HCT116 (cell line): ENCODE measurements at regions of chr3 and their contacts with region 1.

Region 1: GRCh38 chr3:108808371-108808770 is 14.2 kb upstream of the TRAT1 start:
- DNase-seq: no peak
- ATAC-seq: no peak
- H3K4me3 ChIP-seq: no peak overlapping the region
- H3K27ac ChIP-seq: no peak overlapping the region
- H3K4me1 ChIP-seq: peaks cover 0 to 15% of the 10 kb centered on the region in 2 experiments; a peak in 1 of 4 replicates
- H3K27me3 ChIP-seq: no peaks in the 10 kb centered on the region
- CTCF ChIP-seq: no peak
- POLR2A ChIP-seq: no peak
- RAD21 ChIP-seq: no peak

Region 2: DNA sequence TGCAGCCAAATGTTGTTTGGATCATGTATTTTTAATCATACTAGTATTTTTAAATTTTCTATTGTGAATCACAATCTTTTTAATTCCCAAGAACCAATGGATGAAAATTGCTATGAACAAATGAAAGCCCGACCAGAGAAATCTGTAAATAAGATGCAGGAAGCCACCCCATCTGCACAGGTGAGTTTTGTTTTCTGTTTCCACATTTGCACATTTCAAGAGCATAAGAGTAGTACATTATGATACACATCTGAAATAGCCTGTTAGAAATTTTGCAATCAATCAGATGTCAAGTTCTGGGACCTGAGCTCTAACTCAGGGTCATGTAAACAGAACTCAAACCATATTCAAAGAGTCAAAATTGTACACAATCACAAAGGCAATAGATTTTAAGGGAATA is 40.7 kb after region 1 on chr3:
- CTCF ChIA-PET with region 1: no interaction called
- POLR2A ChIA-PET with region 1: no interaction called
- RAD21 ChIA-PET with region 1: no interaction called
- intact Hi-C with region 1: loop called (anchors 1 kb)
- DNase-seq: no peak
- ATAC-seq: no peak
- H3K4me3 ChIP-seq: no peak overlapping the region
- H3K27ac ChIP-seq: no peak overlapping the region
- H3K4me1 ChIP-seq: no peaks in the 10 kb centered on the region
- H3K27me3 ChIP-seq: no peaks in the 10 kb centered on the region
- CTCF ChIP-seq: no peak
- POLR2A ChIP-seq: no peak
- RAD21 ChIP-seq: no peak